CD4-positive, alpha-beta memory T cell (primary cell): ENCODE measurements at regions of chr14 and their contacts with region 1.

Region 1: GRCh38 chr14:38150072-38150471 is 57.6 kb upstream of the SSTR1 start:
- DNase-seq: peak in 1 of 5 donors; percentile 6
- H3K4me3 ChIP-seq: no peak overlapping the region
- H3K4me3 Mint-ChIP-seq: no peak overlapping the region
- H3K27ac ChIP-seq: no peak overlapping the region
- H3K27ac Mint-ChIP-seq: peak overlapping the region in 1 of 7 donors; percentile 48
- H3K4me1 ChIP-seq: no peaks in the 10 kb centered on the region
- H3K4me1 Mint-ChIP-seq: peaks cover 0 to 8% (median 4%) of the 10 kb centered on the region in 4 donors
- H3K27me3 ChIP-seq: no peaks in the 10 kb centered on the region
- H3K27me3 Mint-ChIP-seq: no peaks in the 10 kb centered on the region

Region 2: DNA sequence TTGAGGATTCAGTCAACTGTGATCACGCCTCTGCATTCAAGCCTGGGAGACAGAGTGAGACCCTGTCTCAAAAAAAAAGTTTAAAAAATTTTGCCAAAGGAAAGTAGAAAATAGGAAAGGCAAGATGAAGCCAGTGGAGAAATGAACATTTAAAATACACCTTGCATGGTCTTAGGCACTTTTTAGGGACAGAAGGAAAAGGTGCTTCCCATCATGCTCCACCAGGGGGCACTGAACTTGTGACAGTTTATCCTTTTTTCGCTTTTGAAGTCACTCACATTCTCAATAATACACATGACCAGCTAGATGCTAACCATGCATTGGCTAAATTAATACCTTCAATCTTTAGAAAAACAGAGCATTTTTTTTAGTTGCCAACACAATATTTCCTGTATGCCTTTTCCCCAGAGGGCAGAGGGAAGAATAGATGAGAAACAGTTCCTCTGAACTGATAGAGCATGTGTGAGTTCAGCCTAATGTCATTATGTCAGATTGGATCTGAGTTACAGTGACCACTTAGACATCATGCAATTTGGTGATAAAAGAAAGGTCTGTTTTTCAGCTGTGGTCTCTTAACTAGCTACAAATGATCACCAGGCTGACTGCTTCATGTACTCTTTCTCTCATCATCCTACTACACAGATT is 164.1 kb before region 1 on chr14:
- CTCF ChIA-PET with region 1: interaction called, 5 read pairs
- POLR2A ChIA-PET with region 1: no interaction called
- intact Hi-C with region 1: loop called (anchors 1 kb)
- DNase-seq: peak; percentile 35 to 55 (median 48)
- H3K4me3 ChIP-seq: no peak overlapping the region
- H3K4me3 Mint-ChIP-seq: no peak overlapping the region
- H3K27ac ChIP-seq: no peak overlapping the region
- H3K27ac Mint-ChIP-seq: no peak overlapping the region
- H3K4me1 ChIP-seq: no peaks in the 10 kb centered on the region
- H3K4me1 Mint-ChIP-seq: peaks cover 5 to 6% (median 5%) of the 10 kb centered on the region in 4 donors
- H3K27me3 ChIP-seq: no peaks in the 10 kb centered on the region
- H3K27me3 Mint-ChIP-seq: no peaks in the 10 kb centered on the region